Naive thymus-derived CD4-positive, alpha-beta T cell (primary cell): ENCODE measurements at regions of chr19 and their contacts with region 1.

Region 1: DNA sequence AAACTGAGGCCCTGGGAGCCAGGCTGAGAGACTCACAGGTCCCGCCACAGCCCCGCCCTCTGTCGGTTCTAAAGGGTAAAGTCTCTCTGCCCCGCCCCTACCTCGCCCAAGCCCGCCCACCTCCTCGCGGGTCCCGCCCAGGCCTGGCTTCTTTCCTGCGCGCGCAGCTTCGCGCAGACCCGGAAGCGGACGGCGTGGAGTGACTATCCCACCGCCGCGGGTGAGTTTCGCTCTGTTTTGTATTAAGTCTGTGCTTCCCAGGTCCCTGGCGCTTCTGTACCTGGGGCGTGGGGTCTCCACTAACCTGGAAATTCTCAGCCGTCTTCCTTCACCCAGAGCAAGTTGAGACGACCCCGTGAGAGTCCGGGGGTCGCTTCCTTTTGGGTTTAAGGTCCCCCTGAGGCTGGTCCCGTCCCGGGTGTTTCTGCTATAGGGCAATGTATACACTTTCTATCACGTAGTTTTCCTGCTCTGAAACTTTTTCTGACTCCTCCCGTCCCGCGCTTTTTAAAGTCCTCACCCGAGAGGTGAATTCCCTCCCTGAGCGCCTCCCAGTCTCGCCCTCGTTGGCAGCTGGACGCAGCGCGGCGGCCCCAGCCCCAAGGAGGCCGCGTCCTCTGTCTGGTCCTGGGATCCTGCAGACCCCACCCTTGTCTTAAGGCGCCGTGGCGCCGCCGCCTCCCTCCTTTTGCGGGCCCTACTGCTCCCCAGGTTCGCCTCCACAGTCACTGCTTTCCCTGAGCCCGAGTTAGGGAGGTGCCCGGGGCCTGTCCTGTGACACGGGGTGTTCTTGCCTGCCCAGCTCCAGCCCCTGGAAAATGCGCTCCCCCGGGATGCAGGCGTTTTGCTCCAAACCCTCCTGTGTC is at the start of gene ZNF765:
- DNase-seq: peak; percentile 92 to 99 (median 97)
- ATAC-seq: peak; percentile 100
- H3K4me3 ChIP-seq: peak within 1 kb of the TSS; percentile 97
- H3K4me3 Mint-ChIP-seq: peak within 1 kb of the TSS; percentile 88 to 97 (median 93)
- H3K27ac ChIP-seq: peak within 1 kb of the TSS; percentile 82
- H3K27ac Mint-ChIP-seq: peak within 1 kb of the TSS; percentile 89 to 97 (median 94)
- H3K4me1 ChIP-seq: peaks cover 5 to 8% of the 10 kb centered on the region in 2 donors
- H3K4me1 Mint-ChIP-seq: peaks cover 13 to 40% (median 31%) of the 10 kb centered on the region in 7 donors
- H3K27me3 ChIP-seq: no peaks in the 10 kb centered on the region
- H3K27me3 Mint-ChIP-seq: no peaks in the 10 kb centered on the region
- total RNA-seq, gene ZNF765: 5.1 to 19.5 (median 11.4) TPM

Region 2: DNA sequence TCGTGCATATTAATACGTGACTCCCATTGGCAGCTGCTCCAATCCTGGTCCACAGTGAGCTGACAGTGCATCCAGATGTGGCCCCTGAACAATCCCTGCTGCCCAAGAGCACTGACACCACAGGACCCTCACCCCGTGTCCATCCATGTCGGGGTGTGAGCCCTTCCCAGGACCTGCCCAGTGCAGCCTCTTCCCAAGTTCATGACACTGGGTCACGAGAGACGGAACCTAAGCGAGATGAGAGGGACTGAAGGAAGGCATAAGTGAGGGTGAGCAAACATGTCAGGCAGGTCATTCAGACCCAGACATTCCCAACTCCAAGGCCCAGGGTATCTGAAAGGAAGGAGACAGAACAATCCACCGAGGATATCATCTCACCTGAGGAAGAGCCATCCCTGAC is 541.3 kb before region 1 on chr19:
- CTCF ChIA-PET with region 1: no interaction called
- POLR2A ChIA-PET with region 1: no interaction called
- intact Hi-C with region 1: loop called in 1 of 2 experiments (anchors 1 kb)
- DNase-seq: no peak
- ATAC-seq: no peak
- H3K4me3 ChIP-seq: no peak overlapping the region
- H3K4me3 Mint-ChIP-seq: peak overlapping the region in 1 of 10 donors; percentile 53
- H3K27ac ChIP-seq: no peak overlapping the region
- H3K27ac Mint-ChIP-seq: no peak overlapping the region
- H3K4me1 ChIP-seq: no peaks in the 10 kb centered on the region
- H3K4me1 Mint-ChIP-seq: peaks cover 15 to 39% (median 32%) of the 10 kb centered on the region in 7 donors
- H3K27me3 ChIP-seq: no peaks in the 10 kb centered on the region
- H3K27me3 Mint-ChIP-seq: no peaks in the 10 kb centered on the region

Region 3: GRCh38 chr19:53254411-53255341 is 140.5 kb before region 1 on chr19 and contains the start of gene ZNF677:
- CTCF ChIA-PET with region 1: no interaction called
- POLR2A ChIA-PET with region 1: no interaction called
- intact Hi-C with region 1: loop called in 1 of 2 experiments (anchors 1 kb)
- DNase-seq: peak; percentile 42 to 86 (median 77)
- ATAC-seq: peak; percentile 100
- H3K4me3 ChIP-seq: peak within 1 kb of the TSS; percentile 54
- H3K4me3 Mint-ChIP-seq: peak within 1 kb of the TSS; percentile 84 to 93 (median 89)
- H3K27ac ChIP-seq: peak within 1 kb of the TSS; percentile 66
- H3K27ac Mint-ChIP-seq: peak within 1 kb of the TSS in 8 of 9 donors; percentile 21 to 94 (median 78)
- H3K4me1 ChIP-seq: peaks cover 0 to 6% of the 10 kb centered on the region in 2 donors
- H3K4me1 Mint-ChIP-seq: peaks cover 0 to 17% (median 11%) of the 10 kb centered on the region in 7 donors
- H3K27me3 ChIP-seq: no peaks in the 10 kb centered on the region
- H3K27me3 Mint-ChIP-seq: peaks cover 0 to 13% (median 12%) of the 10 kb centered on the region in 5 donors
- total RNA-seq, gene ZNF677: 2.2 to 25.9 (median 7.4) TPM

Region 4: DNA sequence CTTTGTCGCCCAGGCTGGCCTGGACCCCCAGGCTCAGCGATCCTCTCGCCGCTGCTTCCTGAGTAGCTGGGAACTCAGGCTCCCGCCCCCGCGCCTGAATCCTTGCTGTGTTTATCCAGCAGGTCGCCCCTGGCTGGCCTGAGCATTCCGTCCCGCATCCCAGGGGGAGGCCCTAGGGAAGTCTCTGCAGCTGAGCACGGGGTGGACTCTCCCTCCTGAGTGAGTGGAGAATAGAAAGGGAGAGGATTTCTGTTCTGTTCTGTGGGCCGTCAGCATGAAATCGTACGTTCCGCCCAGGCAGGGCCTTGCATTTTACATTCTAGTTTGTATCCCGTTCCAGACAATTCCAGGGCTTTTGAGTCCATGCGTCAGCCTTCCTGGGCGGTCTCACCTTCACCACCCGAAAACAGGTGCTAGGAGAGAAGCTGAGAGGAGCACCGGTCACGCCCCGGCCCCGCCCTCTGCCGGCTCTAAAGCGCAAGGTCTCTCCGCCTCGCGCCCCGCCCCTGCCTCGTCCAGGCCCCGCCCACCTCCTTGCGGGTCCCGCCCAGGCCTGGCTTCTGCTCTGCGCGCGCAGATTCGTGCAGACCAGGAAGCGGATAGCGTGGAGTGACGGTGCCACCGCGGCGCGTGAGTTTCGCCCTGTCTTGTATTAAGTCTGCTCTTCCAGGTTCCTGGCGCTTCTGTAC is 36.3 kb after region 1 on chr19 and contains the start of gene ZNF761:
- CTCF ChIA-PET with region 1: no interaction called
- POLR2A ChIA-PET with region 1: no interaction called
- intact Hi-C with region 1: loop called (anchors 1 kb)
- DNase-seq: peak; percentile 94 to 99 (median 98)
- ATAC-seq: peak; percentile 100
- H3K4me3 ChIP-seq: peak within 1 kb of the TSS; percentile 91
- H3K4me3 Mint-ChIP-seq: peak within 1 kb of the TSS; percentile 94 to 99 (median 97)
- H3K27ac ChIP-seq: peak within 1 kb of the TSS; percentile 79
- H3K27ac Mint-ChIP-seq: peak within 1 kb of the TSS; percentile 90 to 99 (median 96)
- H3K4me1 ChIP-seq: peaks cover 6 to 16% of the 10 kb centered on the region in 2 donors
- H3K4me1 Mint-ChIP-seq: peaks cover 20 to 55% (median 35%) of the 10 kb centered on the region in 7 donors
- H3K27me3 ChIP-seq: no peaks in the 10 kb centered on the region
- H3K27me3 Mint-ChIP-seq: no peaks in the 10 kb centered on the region
- total RNA-seq, gene ZNF761: 8.0 to 18.8 (median 13.1) TPM

Region 5: GRCh38 chr19:53520550-53521372 is 125.6 kb after region 1 on chr19:
- CTCF ChIA-PET with region 1: no interaction called
- POLR2A ChIA-PET with region 1: interaction called, 3 read pairs
- intact Hi-C with region 1: loop called in 1 of 2 experiments (anchors 1 kb)
- DNase-seq: peak; percentile 65 to 93 (median 89)
- ATAC-seq: peak; percentile 100
- H3K4me3 ChIP-seq: peak overlapping the region; percentile 99
- H3K4me3 Mint-ChIP-seq: peak overlapping the region; percentile 94 to 99 (median 98)
- H3K27ac ChIP-seq: peak overlapping the region; percentile 69
- H3K27ac Mint-ChIP-seq: peak overlapping the region; percentile 84 to 96 (median 94)
- H3K4me1 ChIP-seq: peaks cover 9 to 10% of the 10 kb centered on the region in 2 donors
- H3K4me1 Mint-ChIP-seq: peaks cover 10 to 27% (median 18%) of the 10 kb centered on the region in 7 donors
- H3K27me3 ChIP-seq: no peaks in the 10 kb centered on the region
- H3K27me3 Mint-ChIP-seq: no peaks in the 10 kb centered on the region